WTC11 (cell line): ENCODE measurements at regions of chr1 and their contacts with region 1.

Region 1: DNA sequence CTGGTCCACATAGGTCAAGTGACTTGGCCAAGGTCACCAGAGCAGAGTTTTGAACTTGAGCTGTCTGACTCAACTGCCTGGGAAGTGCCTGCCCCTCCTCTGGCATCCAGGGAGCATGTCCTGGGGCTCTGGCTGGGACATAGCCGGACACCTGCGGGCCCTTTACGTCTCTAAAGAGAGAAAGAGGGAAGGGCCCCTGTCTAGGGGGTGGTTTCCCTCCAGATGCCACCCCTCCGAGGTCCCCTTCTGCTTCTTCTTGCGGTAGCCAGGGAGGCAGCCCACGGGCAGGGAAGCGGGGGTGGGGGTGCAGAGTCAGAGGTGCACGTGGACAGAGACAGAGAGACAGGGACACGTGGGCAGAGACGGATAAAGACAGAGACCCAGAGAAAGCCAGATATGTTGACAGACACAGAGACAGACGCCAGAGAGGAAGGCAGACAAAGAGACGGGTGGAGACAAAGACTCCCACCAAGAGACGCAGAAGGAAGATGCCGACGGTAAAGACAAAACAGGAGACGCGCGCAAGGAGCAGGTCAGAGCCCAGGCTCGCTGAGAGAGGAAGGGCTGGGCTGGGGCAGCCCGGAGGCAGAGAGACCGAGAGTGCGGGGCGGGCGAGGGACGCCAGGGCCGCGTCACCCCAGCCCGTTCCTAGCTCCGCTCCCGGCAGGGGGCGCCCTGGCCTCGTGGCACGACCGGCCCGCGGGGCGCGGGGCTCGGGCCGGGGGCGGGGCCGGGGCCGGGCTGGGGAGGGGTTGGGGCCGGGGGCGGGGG is 458 bp upstream of the ALPL start:
- DNase-seq: peak; percentile 92
- ATAC-seq: peak; percentile 90
- H3K4me3 Mint-ChIP-seq: peak overlapping the region; percentile 69
- H3K27ac Mint-ChIP-seq: no peak overlapping the region
- H3K4me1 Mint-ChIP-seq: peaks cover 34% of the 10 kb centered on the region
- H3K27me3 Mint-ChIP-seq: peaks cover 21% of the 10 kb centered on the region
- CTCF ChIP-seq: no peak

Region 2: DNA sequence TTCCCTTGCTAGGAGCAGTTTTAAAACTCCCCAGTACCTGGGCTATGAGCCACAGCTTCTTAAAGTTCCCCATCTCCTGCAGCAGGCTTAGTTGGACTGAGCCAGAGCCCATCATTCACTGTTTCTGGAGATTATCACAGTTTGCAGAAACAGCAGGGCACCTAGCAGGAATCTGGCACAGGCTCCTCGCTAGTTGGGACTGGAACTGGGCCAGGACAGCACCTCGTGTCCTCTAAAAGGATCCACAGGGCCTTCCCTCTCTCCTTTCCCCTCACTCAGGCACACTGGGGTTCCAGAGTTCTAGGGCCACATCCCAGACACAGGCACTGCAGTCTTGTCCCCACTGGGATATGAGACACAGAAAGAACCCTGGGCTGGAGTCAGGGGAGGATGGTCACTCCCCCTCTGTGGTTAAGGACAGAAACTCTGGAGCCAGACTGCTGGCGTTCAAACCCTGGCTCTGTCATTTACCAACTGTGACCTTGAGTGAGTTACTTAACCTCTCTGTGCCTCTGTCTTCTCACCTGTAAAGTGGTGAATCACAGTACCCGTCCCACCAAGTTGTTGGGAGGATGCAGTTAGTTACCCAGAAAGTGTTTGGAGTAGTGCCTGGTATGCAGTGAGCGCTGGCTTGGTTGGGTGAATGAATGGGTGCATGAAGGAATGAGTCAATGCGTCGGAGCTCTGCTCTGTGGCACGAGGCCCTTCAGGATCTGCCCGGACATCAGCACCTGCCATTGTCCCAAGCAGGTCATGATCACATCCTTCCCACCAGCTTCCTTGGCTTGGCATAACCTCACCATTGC is 199.7 kb before region 1 on chr1:
- CTCF ChIA-PET with region 1: no interaction called
- POLR2A ChIA-PET with region 1: no interaction called
- DNase-seq: no peak
- ATAC-seq: no peak
- H3K4me3 Mint-ChIP-seq: no peak overlapping the region
- H3K27ac Mint-ChIP-seq: peak overlapping the region; percentile 60
- H3K4me1 Mint-ChIP-seq: peaks cover 67% of the 10 kb centered on the region
- H3K27me3 Mint-ChIP-seq: no peaks in the 10 kb centered on the region
- CTCF ChIP-seq: no peak

Region 3: DNA sequence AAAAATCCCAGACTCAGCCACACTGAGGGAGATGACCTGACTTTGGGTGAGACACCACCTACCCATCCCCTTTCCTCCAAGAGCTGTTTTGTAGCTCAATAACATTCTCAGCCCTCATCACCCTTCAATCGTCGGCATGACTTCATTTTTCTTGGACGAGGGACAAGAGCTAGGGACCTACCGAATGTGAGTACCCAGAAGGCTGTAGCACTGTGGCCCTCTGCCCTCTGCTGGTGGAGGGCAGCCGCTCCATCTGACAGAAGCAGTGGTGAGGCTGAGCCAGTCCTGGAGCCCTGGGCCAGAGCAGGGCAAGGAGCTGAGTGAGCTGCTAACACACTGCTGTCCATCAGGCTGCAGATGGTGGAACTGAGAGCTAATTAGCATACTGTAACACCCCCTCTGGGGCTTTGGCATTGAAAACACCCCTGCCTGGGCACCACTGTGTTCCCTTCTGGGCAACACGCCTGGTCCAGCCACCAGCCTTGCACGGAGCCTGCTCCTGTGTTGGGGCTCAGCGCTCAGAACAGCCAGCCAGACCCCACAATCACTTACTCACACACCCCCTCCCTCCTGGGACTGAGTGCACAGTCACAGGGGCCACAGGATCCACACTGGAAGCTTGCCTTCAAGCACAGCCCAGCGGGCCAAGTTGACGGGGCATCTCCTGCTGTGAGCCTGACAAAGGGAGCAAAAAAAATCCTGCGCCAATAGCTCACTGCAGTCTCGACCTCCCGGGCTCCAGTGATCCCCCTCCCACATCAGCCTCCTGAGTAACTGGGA is 17.8 kb before region 1 on chr1:
- CTCF ChIA-PET with region 1: interaction called, 13 read pairs
- POLR2A ChIA-PET with region 1: no interaction called
- DNase-seq: peak; percentile 56
- ATAC-seq: peak; percentile 87
- H3K4me3 Mint-ChIP-seq: no peak overlapping the region
- H3K27ac Mint-ChIP-seq: no peak overlapping the region
- H3K4me1 Mint-ChIP-seq: peaks cover 11% of the 10 kb centered on the region
- H3K27me3 Mint-ChIP-seq: peaks cover 3% of the 10 kb centered on the region; the same call in 1 of the 2 replicates
- CTCF ChIP-seq: no peak

Region 4: DNA sequence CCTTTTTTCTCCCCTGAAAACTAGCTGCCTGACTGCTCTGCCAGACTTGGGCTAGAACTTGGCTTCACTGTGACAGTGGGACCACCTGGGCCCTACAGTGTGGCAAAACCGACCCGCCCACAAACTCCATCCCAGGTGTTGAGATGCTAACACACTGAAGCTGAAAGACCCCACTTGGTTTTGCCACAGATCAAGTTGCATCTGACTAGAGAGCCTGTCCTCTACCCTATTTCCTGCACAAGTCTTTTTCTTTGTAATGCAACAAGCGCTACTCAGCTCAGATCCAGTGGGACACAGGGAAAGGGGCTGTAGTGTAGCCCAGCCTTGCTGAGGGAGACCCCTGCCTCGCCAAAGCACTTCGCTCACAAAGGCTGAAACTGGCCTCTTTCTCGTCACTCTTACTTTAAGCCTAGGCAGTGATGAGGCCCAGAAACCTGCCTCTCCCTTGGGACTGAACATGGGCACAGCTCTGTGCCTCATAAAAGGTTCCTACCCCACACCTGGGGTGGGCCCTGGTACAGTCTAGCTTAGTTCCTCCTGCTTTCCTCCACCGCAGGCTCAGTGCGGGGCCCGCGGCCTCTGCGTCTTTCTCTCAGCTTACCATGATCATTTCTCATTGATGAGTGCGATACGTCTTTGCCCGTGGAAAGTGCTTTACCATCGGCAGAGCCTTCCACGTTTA is 10.2 kb after region 1 on chr1:
- CTCF ChIA-PET with region 1: interaction called, 20 read pairs
- POLR2A ChIA-PET with region 1: no interaction called
- DNase-seq: no peak
- ATAC-seq: peak; percentile 88
- H3K4me3 Mint-ChIP-seq: peak overlapping the region; percentile 41; the same call in 1 of the 2 replicates
- H3K27ac Mint-ChIP-seq: peak overlapping the region; percentile 96
- H3K4me1 Mint-ChIP-seq: peaks cover 54% of the 10 kb centered on the region
- H3K27me3 Mint-ChIP-seq: no peaks in the 10 kb centered on the region
- CTCF ChIP-seq: no peak

Region 5: GRCh38 chr1:21534674-21535378 is 26.1 kb after region 1 on chr1:
- CTCF ChIA-PET with region 1: interaction called, 62 read pairs
- POLR2A ChIA-PET with region 1: interaction called, 4 read pairs
- DNase-seq: peak; percentile 52
- ATAC-seq: peak; percentile 77
- H3K4me3 Mint-ChIP-seq: no peak overlapping the region
- H3K27ac Mint-ChIP-seq: no peak overlapping the region; the same call in 1 of the 2 replicates
- H3K4me1 Mint-ChIP-seq: peaks cover 45% of the 10 kb centered on the region
- H3K27me3 Mint-ChIP-seq: no peaks in the 10 kb centered on the region
- CTCF ChIP-seq: no peak

Region 6: DNA sequence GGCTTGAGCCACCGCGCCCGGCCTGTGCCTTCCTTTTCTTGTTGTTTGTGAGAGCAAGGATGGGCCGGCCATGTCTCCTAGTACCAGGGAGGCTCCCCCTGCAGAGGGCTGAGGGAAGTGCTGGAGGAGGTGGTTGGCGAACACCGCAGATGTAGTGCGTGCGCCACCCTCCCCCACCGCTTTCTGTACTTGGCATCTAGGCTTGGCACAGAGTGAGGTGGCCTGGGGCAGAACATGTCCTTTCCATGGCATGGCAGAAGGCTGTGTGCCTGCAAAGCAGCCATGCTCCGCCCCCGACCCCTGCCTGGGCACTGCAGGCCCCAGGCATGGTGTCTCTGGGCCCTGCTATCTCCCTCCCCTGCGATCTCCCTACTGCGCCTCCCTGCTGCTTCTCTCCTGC is 31.2 kb after region 1 on chr1:
- CTCF ChIA-PET with region 1: interaction called, 62 read pairs
- POLR2A ChIA-PET with region 1: no interaction called
- DNase-seq: peak; percentile 79
- ATAC-seq: peak; percentile 89
- H3K4me3 Mint-ChIP-seq: no peak overlapping the region
- H3K27ac Mint-ChIP-seq: no peak overlapping the region
- H3K4me1 Mint-ChIP-seq: peaks cover 46% of the 10 kb centered on the region
- H3K27me3 Mint-ChIP-seq: no peaks in the 10 kb centered on the region
- CTCF ChIP-seq: peak; percentile 55

Region 7: GRCh38 chr1:21573971-21574465 is 65.3 kb after region 1 on chr1:
- CTCF ChIA-PET with region 1: interaction called, 25 read pairs
- POLR2A ChIA-PET with region 1: no interaction called
- DNase-seq: peak; percentile 83
- ATAC-seq: peak; percentile 73
- H3K4me3 Mint-ChIP-seq: no peak overlapping the region
- H3K27ac Mint-ChIP-seq: no peak overlapping the region; the same call in 1 of the 2 replicates
- H3K4me1 Mint-ChIP-seq: peaks cover 12% of the 10 kb centered on the region
- H3K27me3 Mint-ChIP-seq: no peaks in the 10 kb centered on the region
- CTCF ChIP-seq: no peak

Region 8: DNA sequence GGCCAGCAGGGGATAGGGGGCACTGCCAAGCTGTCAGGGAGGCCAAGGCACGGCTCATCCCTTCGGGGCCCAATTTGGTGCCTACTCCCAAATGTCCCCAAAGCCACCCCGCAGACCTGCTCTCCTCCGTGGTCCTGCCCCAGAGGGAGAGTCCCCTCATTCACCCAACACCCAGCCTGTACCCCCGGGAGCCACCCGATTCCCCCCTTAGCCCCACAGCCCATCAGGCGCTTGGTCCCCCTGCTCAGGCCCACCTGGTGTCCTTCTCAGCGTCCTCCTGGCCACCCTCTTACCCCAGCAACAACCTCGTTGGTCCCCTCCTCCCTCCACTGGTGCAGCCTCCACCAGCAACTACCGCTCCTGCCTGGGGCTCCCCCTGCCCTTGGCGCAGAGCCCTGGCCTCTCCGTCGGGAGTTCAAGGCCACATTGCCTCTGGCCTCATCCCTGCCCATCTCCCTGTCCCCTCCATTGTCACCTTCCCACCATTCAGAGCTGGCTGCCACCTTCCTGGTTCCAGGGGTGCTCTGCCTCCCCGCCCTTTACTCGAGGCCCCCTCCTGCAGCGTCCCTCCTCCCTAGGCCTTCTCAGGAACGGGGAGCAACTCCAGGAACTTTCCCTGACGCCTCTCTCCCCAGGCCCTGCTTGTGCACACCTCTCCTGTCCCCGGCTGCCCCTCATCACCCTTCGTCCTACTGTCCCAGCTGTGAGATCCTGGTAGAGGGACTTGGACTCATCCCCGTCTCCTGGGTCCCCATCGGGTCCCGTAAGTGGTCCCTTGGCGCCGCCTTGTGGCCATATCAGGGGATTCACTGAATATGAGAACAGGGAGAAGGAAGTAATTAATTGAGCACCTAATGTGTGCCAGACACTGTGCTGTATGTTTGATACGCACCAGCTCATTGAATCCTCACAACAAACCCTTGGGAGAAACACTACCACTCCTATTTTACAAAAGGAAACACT is 86.5 kb after region 1 on chr1:
- CTCF ChIA-PET with region 1: interaction called, 14 read pairs
- POLR2A ChIA-PET with region 1: no interaction called
- DNase-seq: peak; percentile 92
- ATAC-seq: peak; percentile 60
- H3K4me3 Mint-ChIP-seq: no peak overlapping the region
- H3K27ac Mint-ChIP-seq: no peak overlapping the region
- H3K4me1 Mint-ChIP-seq: peaks cover 18% of the 10 kb centered on the region
- H3K27me3 Mint-ChIP-seq: no peaks in the 10 kb centered on the region
- CTCF ChIP-seq: peak; percentile 82